MCF 10A (cell line): ENCODE measurements at regions of chrX and their contacts with region 1.

Region 1: DNA sequence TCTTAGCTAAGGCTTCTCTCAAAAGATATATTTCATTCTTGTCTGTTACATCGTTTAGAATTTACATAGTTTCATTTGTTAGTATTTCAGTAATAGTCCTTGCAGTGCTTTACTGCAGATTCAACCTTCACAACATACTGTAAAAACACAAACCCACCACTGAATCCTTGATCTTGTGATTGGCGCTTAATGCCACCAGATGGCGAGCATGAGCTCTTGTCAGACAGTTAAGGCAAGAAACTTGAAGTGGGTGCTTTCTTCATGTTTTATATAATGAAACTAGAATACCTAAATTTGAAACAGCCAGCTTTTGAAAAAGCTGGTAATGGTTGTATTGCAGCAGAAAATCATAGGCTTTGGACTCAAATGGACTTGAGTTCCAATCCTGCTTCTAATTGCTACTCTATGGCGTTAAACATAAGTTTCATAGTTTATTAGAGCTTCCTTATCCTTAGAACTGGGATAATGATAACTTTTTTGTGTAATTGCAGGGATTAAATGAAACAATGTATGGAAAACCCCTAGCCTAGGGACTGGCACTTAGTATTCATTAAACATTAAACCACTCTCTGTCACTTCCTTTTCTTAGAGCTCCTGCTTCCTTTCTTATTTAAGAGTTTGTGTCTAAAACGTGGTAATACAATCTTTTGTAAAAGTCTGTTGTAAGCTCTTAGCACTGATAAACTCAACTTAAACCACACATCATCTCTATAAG is 95.1 kb downstream of the USP9X start:
- DNase-seq: peak; percentile 66
- H3K4me3 Mint-ChIP-seq: no peak overlapping the region
- H3K27ac Mint-ChIP-seq: no peak overlapping the region
- H3K4me1 Mint-ChIP-seq: no peaks in the 10 kb centered on the region
- H3K27me3 Mint-ChIP-seq: no peaks in the 10 kb centered on the region
- CTCF ChIP-seq: peak; percentile 61

Region 2: GRCh38 chrX:41108007-41108406 is 72.3 kb before region 1 on chrX:
- CTCF ChIA-PET with region 1: no interaction called
- POLR2A ChIA-PET with region 1: no interaction called
- intact Hi-C with region 1: no loop called
- DNase-seq: no peak
- H3K4me3 Mint-ChIP-seq: no peak overlapping the region
- H3K27ac Mint-ChIP-seq: no peak overlapping the region
- H3K4me1 Mint-ChIP-seq: peaks cover 6% of the 10 kb centered on the region
- H3K27me3 Mint-ChIP-seq: peaks cover 22% of the 10 kb centered on the region
- CTCF ChIP-seq: no peak

Region 3: DNA sequence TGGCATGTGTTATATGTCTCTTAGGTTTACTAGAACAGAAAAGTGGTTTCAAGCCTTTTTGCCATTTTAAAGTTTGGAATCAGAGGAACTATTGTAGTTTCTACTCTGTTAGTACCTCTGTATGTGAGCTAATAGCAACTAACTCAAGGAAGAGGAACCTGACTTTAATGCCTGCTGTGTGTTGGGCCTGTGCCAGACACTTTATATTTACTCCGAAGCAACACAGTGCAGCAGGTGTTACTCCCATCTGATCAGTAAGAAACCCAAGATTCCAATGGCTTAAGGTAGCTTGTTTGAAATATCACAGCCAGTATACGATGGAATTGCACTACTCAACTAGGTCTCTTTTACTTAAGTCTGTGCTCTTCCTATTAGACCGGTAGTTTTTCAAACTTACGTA is 15.9 kb before region 1 on chrX:
- CTCF ChIA-PET with region 1: interaction called, 46 read pairs
- POLR2A ChIA-PET with region 1: no interaction called
- intact Hi-C with region 1: no loop called
- DNase-seq: no peak
- H3K4me3 Mint-ChIP-seq: no peak overlapping the region
- H3K27ac Mint-ChIP-seq: no peak overlapping the region
- H3K4me1 Mint-ChIP-seq: no peaks in the 10 kb centered on the region
- H3K27me3 Mint-ChIP-seq: no peaks in the 10 kb centered on the region
- CTCF ChIP-seq: no peak

Region 4: GRCh38 chrX:41192880-41193279 is 12.5 kb after region 1 on chrX:
- CTCF ChIA-PET with region 1: interaction called, 12 read pairs
- POLR2A ChIA-PET with region 1: interaction called, 6 read pairs
- intact Hi-C with region 1: no loop called
- DNase-seq: no peak
- H3K4me3 Mint-ChIP-seq: no peak overlapping the region
- H3K27ac Mint-ChIP-seq: peak overlapping the region; percentile 84
- H3K4me1 Mint-ChIP-seq: peaks cover 17% of the 10 kb centered on the region
- H3K27me3 Mint-ChIP-seq: no peaks in the 10 kb centered on the region
- CTCF ChIP-seq: no peak

Region 5: DNA sequence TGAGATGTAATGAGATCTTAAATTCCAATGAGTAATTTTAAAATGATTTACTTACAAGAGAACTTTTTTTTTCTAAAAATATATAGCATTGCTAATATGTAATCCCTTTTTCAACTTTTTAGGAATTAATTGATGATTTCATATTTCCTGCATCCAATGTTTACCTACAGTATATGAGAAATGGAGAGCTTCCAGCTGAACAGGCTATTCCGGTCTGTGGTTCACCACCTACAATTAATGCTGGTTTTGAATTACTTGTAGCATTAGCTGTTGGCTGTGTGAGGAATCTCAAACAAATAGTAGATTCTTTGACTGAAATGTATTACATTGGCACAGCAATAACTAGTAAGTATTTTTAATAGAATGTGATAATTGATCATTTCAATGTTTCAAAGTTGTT is 18.1 kb after region 1 on chrX:
- CTCF ChIA-PET with region 1: interaction called, 22 read pairs
- POLR2A ChIA-PET with region 1: interaction called, 3 read pairs
- intact Hi-C with region 1: no loop called
- DNase-seq: no peak
- H3K4me3 Mint-ChIP-seq: no peak overlapping the region
- H3K27ac Mint-ChIP-seq: no peak overlapping the region
- H3K4me1 Mint-ChIP-seq: no peaks in the 10 kb centered on the region
- H3K27me3 Mint-ChIP-seq: no peaks in the 10 kb centered on the region
- CTCF ChIP-seq: no peak

Region 6: GRCh38 chrX:41224606-41225005 is 44.3 kb after region 1 on chrX:
- CTCF ChIA-PET with region 1: interaction called, 13 read pairs
- POLR2A ChIA-PET with region 1: no interaction called
- intact Hi-C with region 1: no loop called
- DNase-seq: no peak
- H3K4me3 Mint-ChIP-seq: no peak overlapping the region
- H3K27ac Mint-ChIP-seq: no peak overlapping the region
- H3K4me1 Mint-ChIP-seq: no peaks in the 10 kb centered on the region
- H3K27me3 Mint-ChIP-seq: no peaks in the 10 kb centered on the region
- CTCF ChIP-seq: no peak

Region 7: DNA sequence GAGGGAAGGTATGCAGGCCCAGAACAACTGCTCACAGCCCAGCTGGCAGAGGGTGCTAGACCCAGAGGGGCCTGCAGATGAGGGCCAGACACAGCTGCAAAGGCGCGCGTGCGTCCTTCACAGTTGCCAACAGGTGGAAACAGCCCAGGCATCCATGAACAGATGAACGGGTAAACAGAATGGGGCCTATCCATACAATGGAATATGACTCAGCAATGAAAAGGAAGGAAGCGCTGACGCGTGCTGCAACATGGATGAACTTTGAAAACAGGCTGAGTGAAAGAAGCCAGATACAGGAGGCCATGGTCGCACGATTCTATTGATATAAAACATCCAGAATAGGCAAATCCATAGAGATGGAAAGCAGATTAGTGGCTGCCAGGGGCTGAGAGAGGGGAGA is 70.5 kb after region 1 on chrX:
- CTCF ChIA-PET with region 1: interaction called, 98 read pairs
- POLR2A ChIA-PET with region 1: interaction called, 4 read pairs
- intact Hi-C with region 1: loop called (anchors 1 kb)
- DNase-seq: no peak
- H3K4me3 Mint-ChIP-seq: no peak overlapping the region
- H3K27ac Mint-ChIP-seq: no peak overlapping the region
- H3K4me1 Mint-ChIP-seq: peaks cover 4% of the 10 kb centered on the region
- H3K27me3 Mint-ChIP-seq: peaks cover 7% of the 10 kb centered on the region
- CTCF ChIP-seq: no peak

Region 8: GRCh38 chrX:41759817-41760216 is 579.5 kb after region 1 on chrX:
- CTCF ChIA-PET with region 1: interaction called, 11 read pairs
- POLR2A ChIA-PET with region 1: no interaction called
- intact Hi-C with region 1: no loop called
- DNase-seq: peak; percentile 40
- H3K4me3 Mint-ChIP-seq: no peak overlapping the region
- H3K27ac Mint-ChIP-seq: no peak overlapping the region
- H3K4me1 Mint-ChIP-seq: no peaks in the 10 kb centered on the region
- H3K27me3 Mint-ChIP-seq: peaks cover 44% of the 10 kb centered on the region
- CTCF ChIP-seq: peak; percentile 38